Left cardiac atrium (tissue), 4 donors: ENCODE measurements at regions of chr14 and their contacts with region 1.

Region 1: GRCh38 chr14:75982266-75983018 is 647 bp upstream of the TGFB3 start:
- DNase-seq: peak; percentile 89
- ATAC-seq: peak; percentile 73 to 76

Region 2: DNA sequence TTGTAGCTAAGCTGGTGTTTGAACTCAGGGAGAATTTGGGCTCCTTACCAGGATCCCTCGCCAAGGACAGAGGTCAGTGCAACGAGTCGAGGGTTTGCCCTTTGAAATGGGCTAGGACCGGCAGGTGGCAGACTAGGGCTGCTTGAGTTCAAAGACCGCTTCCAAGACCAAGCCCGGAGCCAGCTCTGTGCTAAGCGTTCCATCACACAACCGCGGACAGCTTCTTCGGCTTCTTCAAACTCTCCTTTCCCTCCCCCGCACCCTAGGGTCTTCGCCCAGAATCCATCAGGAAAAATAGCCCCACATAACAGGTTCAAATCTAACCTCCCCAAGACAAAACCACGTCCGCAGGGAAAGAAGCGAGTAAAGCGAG is 404.7 kb before region 1 on chr14:
- intact Hi-C with region 1: loop called in 1 of 2 experiments (anchors 5 kb)
- DNase-seq: peak; percentile 92
- ATAC-seq: peak; percentile 79 to 94

Region 3: GRCh38 chr14:75711104-75711795 is 271.2 kb before region 1 on chr14:
- intact Hi-C with region 1: loop called (anchors 2 to 5 kb)
- DNase-seq: no peak
- ATAC-seq: peak; percentile 79

Region 4: GRCh38 chr14:75794615-75795038 is 187.8 kb before region 1 on chr14:
- intact Hi-C with region 1: loop called in 1 of 2 experiments (anchors 5 kb)
- DNase-seq: no peak
- ATAC-seq: peak; percentile 98

Region 5: DNA sequence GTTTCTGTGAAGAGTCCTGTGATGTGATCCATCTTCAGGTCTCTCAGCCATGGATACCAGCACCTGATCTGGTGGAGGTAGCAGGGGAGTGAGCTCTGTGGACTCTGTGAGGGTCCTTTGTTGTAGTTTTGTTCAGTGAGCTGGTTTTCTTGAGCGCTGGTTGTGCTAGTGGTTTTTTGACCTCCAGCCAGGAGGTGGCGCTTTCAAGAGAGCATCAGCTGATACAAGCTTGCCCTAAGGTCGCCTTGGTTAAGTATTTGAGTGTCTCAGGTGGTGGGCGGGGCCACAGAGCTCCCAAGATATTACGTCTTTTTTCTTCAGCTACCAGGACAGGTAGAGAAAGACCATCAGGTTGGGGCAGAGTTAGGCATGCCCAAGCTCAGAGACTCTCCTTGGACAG is 181.7 kb before region 1 on chr14:
- intact Hi-C with region 1: loop called in 1 of 2 experiments (anchors 10 kb)
- DNase-seq: no peak
- ATAC-seq: no peak

Region 6: DNA sequence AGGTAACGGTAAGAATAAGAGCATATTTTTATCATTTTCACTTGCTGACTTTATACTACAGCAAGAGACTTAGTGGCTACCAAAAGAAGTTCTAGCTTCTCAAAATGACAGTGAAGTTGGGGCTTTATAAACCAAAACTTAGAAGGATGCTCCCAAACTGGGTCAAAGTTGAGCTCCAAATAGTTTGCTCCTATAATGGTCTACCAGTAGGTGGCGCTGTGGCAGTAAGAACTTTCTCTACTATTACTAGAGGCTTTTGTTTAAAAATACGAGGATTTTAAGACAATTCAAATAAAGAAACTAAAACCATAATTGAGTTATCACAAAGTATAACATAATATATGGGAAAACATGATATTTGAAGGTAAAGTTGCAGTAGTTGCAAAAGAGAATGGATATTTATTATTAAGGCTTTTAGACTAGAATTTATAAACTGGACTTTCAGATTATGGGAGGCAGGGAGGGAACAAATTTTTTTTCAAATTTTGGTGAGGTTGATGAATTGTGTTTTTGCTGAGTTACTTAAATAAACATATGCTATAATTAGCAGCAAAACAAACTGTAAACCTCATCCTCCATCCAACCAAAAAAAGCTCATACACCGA is 75.7 kb before region 1 on chr14:
- intact Hi-C with region 1: loop called (anchors 2 to 5 kb)
- DNase-seq: peak; percentile 64
- ATAC-seq: peak; percentile 46 to 69